ENCODE measurements at regions of chr13 and their contacts with region 1.

Region 1: DNA sequence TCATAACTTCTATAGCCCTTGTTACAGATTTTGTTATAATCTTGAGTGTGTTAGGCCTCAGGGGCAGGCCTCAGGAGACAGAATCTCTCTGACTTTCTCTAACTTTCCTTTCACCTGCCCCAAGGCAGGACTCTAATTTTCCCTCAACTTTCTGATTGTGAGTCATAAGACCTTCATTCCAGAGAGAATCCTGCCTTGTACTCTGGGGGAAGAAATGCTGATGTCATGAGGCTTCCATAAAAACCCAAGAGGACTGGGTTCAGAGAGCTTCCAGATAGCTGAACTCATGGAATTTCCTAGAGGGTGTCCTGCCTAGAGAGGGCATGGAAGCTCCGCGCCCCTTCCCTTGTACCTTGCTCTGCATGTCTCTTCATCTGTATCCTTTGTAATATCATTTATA is 5.3 kb upstream of the KBTBD6 start:
- DNase-seq: no peak
- ATAC-seq: no peak
- H3K4me3 ChIP-seq: no peak overlapping the region
- H3K27ac ChIP-seq: no peak overlapping the region
- H3K4me1 ChIP-seq: no peaks in the 10 kb centered on the region
- H3K27me3 ChIP-seq: no peaks in the 10 kb centered on the region
- CTCF ChIP-seq: no peak

Region 2: GRCh38 chr13:41004875-41005693 is 132.9 kb before region 1 on chr13:
- intact Hi-C with region 1: no loop called
- DNase-seq: no peak
- ATAC-seq: no peak
- H3K4me3 ChIP-seq: no peak overlapping the region
- H3K27ac ChIP-seq: peak overlapping the region in 2 of 4 donors; percentile 20 to 30
- H3K4me1 ChIP-seq: peaks cover 56 to 83% (median 75%) of the 10 kb centered on the region in 3 donors
- H3K27me3 ChIP-seq: no peaks in the 10 kb centered on the region
- CTCF ChIP-seq: no peak

Region 3: DNA sequence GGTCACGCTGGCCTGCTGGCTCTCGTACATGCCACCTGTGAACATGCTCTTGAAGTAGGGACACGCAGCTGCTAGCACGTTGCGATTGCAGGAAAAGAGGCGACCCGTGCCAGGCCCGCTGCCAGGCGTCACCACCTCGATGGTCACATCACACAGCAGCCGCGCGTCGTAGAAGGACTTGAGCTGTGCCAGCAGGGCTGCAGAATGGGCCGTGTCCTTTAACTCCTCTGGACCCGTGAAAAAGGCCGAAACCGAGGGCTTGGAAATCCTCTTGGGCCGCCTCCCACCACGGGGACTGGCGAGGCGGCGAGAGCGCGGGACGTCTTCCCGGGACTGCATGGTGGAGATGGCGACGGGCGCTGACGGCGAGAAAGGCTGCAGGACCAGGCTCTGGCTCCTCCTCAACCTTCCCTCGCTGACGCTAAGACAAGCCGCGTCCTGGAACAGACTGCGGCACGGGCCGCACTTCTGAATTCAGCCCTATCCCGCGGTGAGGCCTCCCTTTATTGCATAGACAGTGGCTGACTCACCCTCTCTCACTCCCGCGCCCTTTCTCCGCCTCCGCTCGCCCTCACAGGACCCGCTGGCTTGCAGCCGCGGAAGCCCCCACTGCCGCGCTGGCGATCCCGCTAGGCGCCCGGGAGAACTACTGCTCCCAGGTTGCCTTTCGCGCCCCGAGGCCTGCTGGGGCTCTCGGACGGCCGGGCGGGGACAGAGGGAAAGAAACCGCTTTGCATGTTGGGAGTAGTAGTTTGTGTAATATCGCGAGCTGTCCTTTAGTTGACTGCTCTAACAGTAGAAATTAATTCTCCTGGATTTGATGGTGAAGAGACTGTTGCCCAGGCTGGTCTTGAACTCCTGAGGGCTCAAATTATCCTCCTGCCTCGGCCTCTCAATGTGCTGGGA is 56.2 kb after region 1 on chr13 and contains the start of gene KBTBD7:
- intact Hi-C with region 1: loop called in 1 of 3 experiments (anchors 5 kb)
- DNase-seq: peak; percentile 87 to 96 (median 92)
- ATAC-seq: peak; percentile 98 to 100 (median 99)
- H3K4me3 ChIP-seq: peak within 1 kb of the TSS; percentile 55 to 82 (median 72)
- H3K27ac ChIP-seq: peak within 1 kb of the TSS; percentile 76 to 87 (median 86)
- H3K4me1 ChIP-seq: peaks cover 6 to 21% (median 18%) of the 10 kb centered on the region in 3 donors
- H3K27me3 ChIP-seq: no peaks in the 10 kb centered on the region
- CTCF ChIP-seq: no peak
- total RNA-seq, gene KBTBD7: 2.7 to 5.9 (median 4.1) TPM

Region 4: GRCh38 chr13:41244556-41244955 is 106.6 kb after region 1 on chr13:
- intact Hi-C with region 1: no loop called
- DNase-seq: no peak
- ATAC-seq: no peak
- H3K4me3 ChIP-seq: no peak overlapping the region
- H3K27ac ChIP-seq: no peak overlapping the region
- H3K4me1 ChIP-seq: no peaks in the 10 kb centered on the region
- H3K27me3 ChIP-seq: no peaks in the 10 kb centered on the region
- CTCF ChIP-seq: no peak